ENCODE measurements at regions of chr6 and their contacts with region 1.

Region 1: GRCh38 chr6:33161354-33162331 is 30.6 kb downstream of the COL11A2 start:
- DNase-seq: peak; percentile 87
- ATAC-seq: peak; percentile 97
- H3K4me3 ChIP-seq: peak overlapping the region in 4 of 5 experiments; percentile 52 to 68 (median 62)
- H3K4me3 Mint-ChIP-seq: peak overlapping the region; percentile 95
- H3K27ac ChIP-seq: peak overlapping the region in 1 of 2 donors; percentile 29
- H3K27ac Mint-ChIP-seq: peak overlapping the region; percentile 78
- H3K4me1 ChIP-seq: peaks cover 7 to 18% of the 10 kb centered on the region in 2 donors
- H3K4me1 Mint-ChIP-seq: peaks cover 17% of the 10 kb centered on the region
- H3K27me3 ChIP-seq: peaks cover 0 to 3% (median 0%) of the 10 kb centered on the region in 4 experiments
- H3K27me3 Mint-ChIP-seq: peaks cover 16% of the 10 kb centered on the region
- CTCF ChIP-seq: peak; percentile 93

Region 2: GRCh38 chr6:33172688-33173534 is 11.3 kb after region 1 on chr6:
- CTCF ChIA-PET with region 1: interaction called, 15 read pairs
- POLR2A ChIA-PET with region 1: no interaction called
- intact Hi-C with region 1: no loop called
- DNase-seq: peak; percentile 58
- ATAC-seq: no peak
- H3K4me3 ChIP-seq: no peak overlapping the region
- H3K4me3 Mint-ChIP-seq: no peak overlapping the region
- H3K27ac ChIP-seq: no peak overlapping the region
- H3K27ac Mint-ChIP-seq: no peak overlapping the region
- H3K4me1 ChIP-seq: peaks cover 0 to 10% of the 10 kb centered on the region in 2 donors
- H3K4me1 Mint-ChIP-seq: peaks cover 9% of the 10 kb centered on the region
- H3K27me3 ChIP-seq: peaks cover 0 to 14% (median 6%) of the 10 kb centered on the region in 4 experiments
- H3K27me3 Mint-ChIP-seq: peaks cover 23% of the 10 kb centered on the region
- CTCF ChIP-seq: peak; percentile 48

Region 3: DNA sequence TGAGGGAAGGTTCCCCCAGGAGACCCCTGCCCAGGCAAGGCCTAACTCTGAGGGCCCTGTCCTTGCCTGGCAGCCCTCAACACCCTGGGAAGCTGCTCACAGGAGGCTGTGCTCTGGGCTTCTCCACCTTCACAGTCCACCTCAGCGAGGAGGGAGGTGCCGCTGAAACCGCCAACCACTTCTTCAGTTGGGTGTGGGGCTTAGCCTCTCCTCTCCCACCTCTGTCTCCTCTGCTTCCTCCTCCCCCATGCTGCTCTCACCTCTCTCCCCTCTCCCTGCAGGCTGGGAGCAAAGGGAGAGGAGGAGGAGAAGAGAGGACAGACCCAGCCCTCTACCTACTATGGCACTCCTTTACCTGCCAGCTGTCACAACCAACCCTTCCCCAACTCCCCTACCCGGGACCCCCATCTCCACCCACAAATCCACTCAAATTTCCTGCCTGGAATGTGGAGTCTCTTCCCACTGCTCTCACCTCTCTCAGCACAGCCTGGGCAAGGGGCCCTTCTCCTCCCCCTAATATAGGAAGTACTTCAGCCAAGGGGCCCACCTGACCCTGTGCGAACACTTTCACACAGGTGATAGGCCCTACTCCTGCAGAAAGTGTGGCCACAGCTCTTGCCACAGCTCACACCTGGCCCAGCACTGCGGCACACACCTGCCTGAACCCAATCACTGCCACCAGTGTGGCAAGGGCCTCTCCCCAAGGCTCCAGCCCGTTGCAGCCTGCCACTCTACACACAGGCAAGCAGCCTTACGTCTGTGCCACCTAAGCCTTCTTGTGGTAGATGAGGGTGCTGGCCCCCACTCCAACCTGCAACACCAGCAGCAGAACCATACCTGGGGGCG is 53.9 kb after region 1 on chr6:
- CTCF ChIA-PET with region 1: no interaction called
- POLR2A ChIA-PET with region 1: no interaction called
- intact Hi-C with region 1: no loop called
- DNase-seq: no peak
- ATAC-seq: no peak
- H3K4me3 ChIP-seq: no peak overlapping the region
- H3K4me3 Mint-ChIP-seq: no peak overlapping the region
- H3K27ac ChIP-seq: no peak overlapping the region
- H3K27ac Mint-ChIP-seq: no peak overlapping the region
- H3K4me1 ChIP-seq: peaks cover 14 to 15% of the 10 kb centered on the region in 2 donors
- H3K4me1 Mint-ChIP-seq: peaks cover 19% of the 10 kb centered on the region
- H3K27me3 ChIP-seq: peaks cover 0 to 44% (median 12%) of the 10 kb centered on the region in 4 experiments
- H3K27me3 Mint-ChIP-seq: peaks cover 46% of the 10 kb centered on the region
- CTCF ChIP-seq: no peak

Region 4: DNA sequence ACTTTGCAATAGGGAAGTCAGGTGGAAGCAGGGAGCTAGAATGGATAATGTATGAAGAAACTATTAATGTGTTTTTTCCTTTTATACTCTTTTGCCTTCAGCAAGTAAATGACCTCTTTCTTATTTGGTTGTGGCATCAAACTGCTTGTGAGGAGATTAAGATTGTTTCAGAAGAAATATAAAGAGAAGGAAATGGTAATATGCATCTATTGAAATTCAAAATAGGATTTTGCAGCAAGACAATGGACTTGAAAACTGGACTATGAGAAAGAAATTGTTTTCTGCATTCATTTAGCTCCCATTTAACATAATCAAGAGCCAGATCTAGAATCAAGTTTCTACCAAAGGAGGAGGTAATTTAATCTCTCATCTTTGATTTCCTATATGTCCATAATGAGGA is 197.7 kb after region 1 on chr6:
- CTCF ChIA-PET with region 1: no interaction called
- POLR2A ChIA-PET with region 1: no interaction called
- intact Hi-C with region 1: no loop called
- DNase-seq: no peak
- ATAC-seq: no peak
- H3K4me3 ChIP-seq: no peak overlapping the region
- H3K4me3 Mint-ChIP-seq: no peak overlapping the region
- H3K27ac ChIP-seq: no peak overlapping the region
- H3K27ac Mint-ChIP-seq: no peak overlapping the region
- H3K4me1 ChIP-seq: no peaks in the 10 kb centered on the region
- H3K4me1 Mint-ChIP-seq: no peaks in the 10 kb centered on the region
- H3K27me3 ChIP-seq: peaks cover 0 to 2% (median 0%) of the 10 kb centered on the region in 4 experiments
- H3K27me3 Mint-ChIP-seq: peaks cover 8% of the 10 kb centered on the region
- CTCF ChIP-seq: no peak